Adrenal gland (tissue), 19 donors: ENCODE measurements at regions of chr2 and their contacts with region 1.

Region 1: GRCh38 chr2:201231781-201232466 is 28.4 kb upstream of the CASP8 start:
- DNase-seq: peak; percentile 86 to 96 (median 93)
- H3K4me3 ChIP-seq: peak overlapping the region in 1 of 4 donors; percentile 27
- H3K27ac ChIP-seq: peak overlapping the region in 2 of 5 donors; percentile 11 to 59
- H3K4me1 ChIP-seq: peaks cover 8 to 37% of the 10 kb centered on the region in 2 donors
- H3K27me3 ChIP-seq: no peaks in the 10 kb centered on the region
- CTCF ChIP-seq: peak; percentile 84 to 92 (median 88)
- POLR2A ChIP-seq: no peak

Region 2: DNA sequence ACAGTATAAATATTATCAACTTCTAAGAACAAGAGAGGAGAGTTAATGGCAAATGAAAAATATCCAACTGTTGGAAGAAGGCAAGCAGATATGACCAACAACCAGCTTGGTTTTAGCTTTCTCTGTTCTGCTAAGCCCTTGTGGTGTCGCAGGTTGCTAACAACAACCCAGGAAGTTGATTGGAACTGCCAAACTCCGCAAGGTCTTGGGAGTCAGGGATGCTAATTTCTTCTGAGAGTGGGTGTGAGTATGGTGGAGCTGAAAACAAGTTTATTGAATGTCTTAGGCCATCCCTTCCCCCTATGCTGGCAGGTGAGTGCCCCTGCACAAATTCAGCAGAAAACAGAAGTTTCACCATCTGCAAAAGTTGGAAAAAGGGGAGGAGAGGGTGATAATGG is 402.7 kb before region 1 on chr2:
- intact Hi-C with region 1: no loop called
- DNase-seq: peak in 1 of 7 donors; percentile 23
- H3K4me3 ChIP-seq: no peak overlapping the region
- H3K27ac ChIP-seq: no peak overlapping the region
- H3K4me1 ChIP-seq: peaks cover 21 to 26% of the 10 kb centered on the region in 2 donors
- H3K27me3 ChIP-seq: no peaks in the 10 kb centered on the region
- CTCF ChIP-seq: no peak
- POLR2A ChIP-seq: no peak

Region 3: GRCh38 chr2:201057087-201057521 is 174.8 kb before region 1 on chr2:
- intact Hi-C with region 1: no loop called
- DNase-seq: no peak
- H3K4me3 ChIP-seq: no peak overlapping the region
- H3K27ac ChIP-seq: peak overlapping the region in 2 of 5 donors; percentile 43 to 56
- H3K4me1 ChIP-seq: peaks cover 13 to 21% of the 10 kb centered on the region in 2 donors
- H3K27me3 ChIP-seq: no peaks in the 10 kb centered on the region
- CTCF ChIP-seq: no peak
- POLR2A ChIP-seq: no peak

Region 4: GRCh38 chr2:201182650-201183364 is 49.1 kb before region 1 on chr2 and contains the start of gene CASP10:
- intact Hi-C with region 1: loop called in 1 of 2 experiments (anchors 5 kb)
- DNase-seq: no peak
- H3K4me3 ChIP-seq: peak within 1 kb of the TSS; percentile 11 to 60 (median 25)
- H3K27ac ChIP-seq: peak within 1 kb of the TSS in 4 of 5 donors; percentile 28 to 61 (median 40)
- H3K4me1 ChIP-seq: peaks cover 0 to 5% of the 10 kb centered on the region in 2 donors
- H3K27me3 ChIP-seq: no peaks in the 10 kb centered on the region
- CTCF ChIP-seq: peak in 5 of 6 experiments; percentile 36 to 54 (median 42)
- POLR2A ChIP-seq: peak; percentile 13 to 36
- total RNA-seq, gene CASP10: 3.3 to 12.8 (median 5.4) TPM

Region 5: GRCh38 chr2:201327678-201328077 is 95.8 kb after region 1 on chr2:
- intact Hi-C with region 1: no loop called
- DNase-seq: no peak
- H3K4me3 ChIP-seq: no peak overlapping the region
- H3K27ac ChIP-seq: no peak overlapping the region
- H3K4me1 ChIP-seq: no peaks in the 10 kb centered on the region
- H3K27me3 ChIP-seq: no peaks in the 10 kb centered on the region
- CTCF ChIP-seq: no peak
- POLR2A ChIP-seq: no peak

Region 6: GRCh38 chr2:201363857-201364560 is 132.1 kb after region 1 on chr2:
- intact Hi-C with region 1: loop called (anchors 5 kb)
- DNase-seq: peak in 1 of 7 donors; percentile 16
- H3K4me3 ChIP-seq: no peak overlapping the region
- H3K27ac ChIP-seq: no peak overlapping the region
- H3K4me1 ChIP-seq: no peaks in the 10 kb centered on the region
- H3K27me3 ChIP-seq: no peaks in the 10 kb centered on the region
- CTCF ChIP-seq: peak; percentile 40 to 78 (median 68)
- POLR2A ChIP-seq: no peak

Region 7: DNA sequence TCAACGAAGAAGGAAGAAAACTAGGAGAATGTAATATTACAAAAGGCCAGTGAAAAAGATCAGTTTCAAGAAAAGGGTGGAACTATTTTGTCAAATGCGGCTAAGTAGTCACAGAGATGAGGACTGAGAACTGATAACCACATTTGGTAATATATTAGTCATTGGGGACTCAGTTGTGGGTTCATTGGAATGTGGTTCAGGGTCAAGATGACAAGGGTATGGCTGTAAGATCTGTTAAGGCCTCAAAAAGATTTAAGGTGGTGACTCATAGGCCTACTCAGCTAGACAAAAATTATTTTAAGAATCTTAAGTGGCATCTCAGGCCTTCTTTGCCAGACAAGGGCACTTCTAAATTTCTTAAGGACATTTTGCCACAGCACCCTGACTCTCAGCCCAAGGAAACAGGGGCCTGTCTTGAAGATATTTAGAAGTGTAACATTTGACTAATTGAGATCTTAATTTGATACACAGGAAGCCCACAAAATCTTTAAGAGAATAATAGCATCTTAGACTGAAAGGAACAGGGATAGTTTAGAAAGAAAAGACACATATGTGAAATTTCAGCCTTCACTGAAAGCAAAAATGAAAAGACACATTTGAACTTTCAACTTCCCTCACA is 300.9 kb after region 1 on chr2:
- intact Hi-C with region 1: no loop called
- DNase-seq: no peak
- H3K4me3 ChIP-seq: no peak overlapping the region
- H3K27ac ChIP-seq: no peak overlapping the region
- H3K4me1 ChIP-seq: no peaks in the 10 kb centered on the region
- H3K27me3 ChIP-seq: no peaks in the 10 kb centered on the region
- CTCF ChIP-seq: no peak
- POLR2A ChIP-seq: no peak